Endothelial cell of umbilical vein (primary cell): ENCODE measurements at regions of chr6 and their contacts with region 1.

Region 1: DNA sequence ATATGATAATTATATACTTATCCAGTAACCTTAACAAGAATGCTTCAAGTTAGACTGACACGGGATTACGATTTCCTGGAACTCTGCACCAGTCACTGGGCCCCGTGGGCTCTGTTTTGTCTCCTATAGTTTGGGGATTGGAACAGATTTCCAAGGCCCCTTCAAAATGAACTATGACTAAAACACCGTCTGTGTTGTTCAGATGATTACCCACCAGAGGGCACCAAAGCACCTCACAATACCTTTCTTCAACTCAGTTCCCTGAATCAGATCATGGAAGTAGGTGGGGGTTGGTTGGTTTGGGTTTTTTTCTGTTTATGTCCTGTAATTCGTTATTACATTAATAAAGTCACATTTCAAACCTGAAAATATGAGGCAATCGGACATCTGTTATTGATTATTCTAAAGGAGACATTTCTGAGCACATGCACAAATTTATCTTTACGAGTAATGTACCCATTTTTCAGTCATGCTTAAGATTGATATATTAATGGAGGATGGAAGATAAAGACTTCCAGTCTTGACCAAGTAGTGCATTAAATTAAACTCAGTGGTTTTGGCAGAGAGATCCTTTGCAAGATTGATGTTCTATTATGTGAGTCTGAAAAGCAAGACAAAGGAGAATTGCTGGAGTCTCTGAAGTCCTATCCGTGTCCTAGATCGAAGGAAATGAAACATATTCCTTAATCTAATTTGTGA is 112.0 kb upstream of the COL21A1 start:
- DNase-seq: peak; percentile 83
- H3K4me3 ChIP-seq: no peak overlapping the region
- H3K27ac ChIP-seq: no peak overlapping the region
- H3K4me1 ChIP-seq: peaks cover 47% of the 10 kb centered on the region
- H3K27me3 ChIP-seq: no peaks in the 10 kb centered on the region
- CTCF ChIP-seq: peak; percentile 55 to 59
- POLR2A ChIP-seq: no peak

Region 2: GRCh38 chr6:56329271-56330050 is 29.9 kb before region 1 on chr6:
- CTCF ChIA-PET with region 1: interaction called, 10 read pairs
- POLR2A ChIA-PET with region 1: no interaction called
- dilution Hi-C with region 1: no loop called
- intact Hi-C with region 1: loop called (anchors 1 kb)
- DNase-seq: peak; percentile 97
- H3K4me3 ChIP-seq: peak overlapping the region in 1 of 3 experiments; percentile 41
- H3K27ac ChIP-seq: peak overlapping the region; percentile 60
- H3K4me1 ChIP-seq: peaks cover 21% of the 10 kb centered on the region
- H3K27me3 ChIP-seq: no peaks in the 10 kb centered on the region
- CTCF ChIP-seq: no peak
- POLR2A ChIP-seq: peak; percentile 49

Region 3: DNA sequence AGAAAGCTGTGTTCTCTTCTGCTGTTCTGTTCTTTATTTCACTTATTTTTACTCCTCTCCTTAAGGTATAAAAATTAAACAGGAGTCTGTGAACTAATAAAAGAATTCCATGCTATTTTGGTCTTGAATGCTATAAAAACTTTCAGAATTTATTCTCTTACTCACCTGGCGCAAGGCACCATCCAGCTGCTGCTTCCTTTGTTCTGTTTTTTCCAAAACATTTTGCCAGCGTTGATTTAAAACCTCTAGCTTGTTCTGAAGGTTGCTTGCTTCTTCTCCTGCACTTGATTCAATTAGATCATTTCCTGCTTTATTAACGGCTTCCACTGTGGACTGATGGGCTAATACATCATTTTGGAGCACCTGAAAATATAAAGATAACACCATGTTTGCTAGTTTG is 138.3 kb after region 1 on chr6:
- CTCF ChIA-PET with region 1: no interaction called
- POLR2A ChIA-PET with region 1: no interaction called
- dilution Hi-C with region 1: no loop called
- intact Hi-C with region 1: no loop called
- DNase-seq: peak; percentile 42
- H3K4me3 ChIP-seq: no peak overlapping the region
- H3K27ac ChIP-seq: no peak overlapping the region
- H3K4me1 ChIP-seq: peaks cover 6% of the 10 kb centered on the region
- H3K27me3 ChIP-seq: no peaks in the 10 kb centered on the region
- CTCF ChIP-seq: no peak
- POLR2A ChIP-seq: no peak

Region 4: DNA sequence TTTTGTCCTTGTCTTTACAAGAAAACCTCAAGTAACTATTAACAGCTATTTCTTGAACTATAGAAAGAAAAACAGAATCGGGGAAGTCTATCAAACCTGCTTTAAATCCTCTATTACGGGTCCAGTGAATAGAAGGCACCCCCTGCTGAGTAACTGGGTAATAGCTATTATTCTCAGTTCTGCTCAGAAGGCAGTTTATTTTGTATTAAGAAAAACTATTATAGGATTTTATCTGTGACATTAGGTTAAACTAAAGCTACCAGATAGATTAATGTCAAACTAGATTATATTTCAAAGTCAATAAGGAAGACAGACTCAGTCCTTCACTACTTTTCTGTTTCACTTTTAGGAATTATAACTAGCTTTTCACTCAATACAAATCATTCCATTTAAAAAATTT is 189.7 kb after region 1 on chr6:
- CTCF ChIA-PET with region 1: interaction called, 12 read pairs
- POLR2A ChIA-PET with region 1: no interaction called
- dilution Hi-C with region 1: no loop called
- intact Hi-C with region 1: loop called (anchors 1 kb)
- DNase-seq: peak; percentile 64
- H3K4me3 ChIP-seq: no peak overlapping the region
- H3K27ac ChIP-seq: no peak overlapping the region
- H3K4me1 ChIP-seq: no peaks in the 10 kb centered on the region
- H3K27me3 ChIP-seq: no peaks in the 10 kb centered on the region
- CTCF ChIP-seq: peak in 1 of 2 donors; percentile 32
- POLR2A ChIP-seq: no peak